ENCODE measurements at regions of chr20 and their contacts with region 1.

Region 1: DNA sequence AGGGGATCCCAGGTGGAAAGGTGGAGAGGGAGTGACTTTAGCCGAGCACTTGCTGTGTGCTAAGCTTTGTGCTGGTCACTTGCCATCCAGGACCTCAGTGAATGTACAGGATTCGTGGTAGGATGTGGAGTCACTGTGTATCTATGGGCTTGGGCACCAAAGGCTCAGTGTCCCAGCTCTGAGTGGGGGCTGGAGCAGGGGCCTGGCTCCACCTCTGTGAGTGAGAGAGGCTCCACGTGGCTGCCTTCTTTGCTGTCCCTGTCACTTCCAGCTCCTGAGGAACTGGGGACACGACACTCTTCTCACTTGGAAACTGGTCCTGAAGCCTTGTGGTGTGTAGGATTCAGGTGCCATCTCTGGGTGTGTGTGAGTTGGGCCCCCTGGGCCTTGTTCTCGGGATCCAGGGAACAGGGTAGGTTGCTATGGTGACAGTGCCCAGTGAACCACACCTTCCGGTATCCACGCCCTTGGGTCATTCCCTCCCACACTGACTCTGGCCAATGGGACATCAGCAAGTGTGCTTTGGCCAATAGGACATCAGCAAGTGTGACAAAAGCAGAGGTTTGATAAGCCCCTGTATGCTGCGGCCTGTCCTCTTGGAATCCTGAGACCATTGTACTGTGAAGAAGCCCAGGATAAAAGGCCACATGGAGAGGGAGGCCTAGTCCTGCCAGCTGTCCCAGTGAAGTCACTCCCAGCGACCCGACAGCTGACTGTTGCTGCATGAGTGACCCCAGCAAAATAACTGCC is 87.7 kb downstream of the CDH22 start:
- DNase-seq: no peak
- H3K4me3 ChIP-seq: no peak overlapping the region
- H3K27ac ChIP-seq: no peak overlapping the region
- H3K4me1 ChIP-seq: no peaks in the 10 kb centered on the region
- H3K27me3 ChIP-seq: peaks cover 0 to 11% of the 10 kb centered on the region in 2 donors
- CTCF ChIP-seq: no peak
- POLR2A ChIP-seq: no peak

Region 2: GRCh38 chr20:46255429-46256104 is 34.9 kb after region 1 on chr20:
- intact Hi-C with region 1: loop called (anchors 1 kb)
- DNase-seq: peak; percentile 30 to 65
- H3K4me3 ChIP-seq: no peak overlapping the region
- H3K27ac ChIP-seq: no peak overlapping the region
- H3K4me1 ChIP-seq: no peaks in the 10 kb centered on the region
- H3K27me3 ChIP-seq: peaks cover 0 to 49% of the 10 kb centered on the region in 2 donors
- CTCF ChIP-seq: no peak
- POLR2A ChIP-seq: no peak